ENCODE measurements at regions of chr9 and their contacts with region 1.

Region 1: GRCh38 chr9:111597817-111598729 is 1.4 kb downstream of the PTGR1 start:
- DNase-seq: peak; percentile 9 to 80 (median 62)
- ATAC-seq: peak; percentile 75
- H3K4me3 ChIP-seq: peak overlapping the region; percentile 47 to 66
- H3K4me3 Mint-ChIP-seq: peak overlapping the region; percentile 87
- H3K27ac ChIP-seq: no peak overlapping the region
- H3K27ac Mint-ChIP-seq: no peak overlapping the region
- H3K4me1 ChIP-seq: peaks cover 12% of the 10 kb centered on the region
- H3K4me1 Mint-ChIP-seq: peaks cover 19% of the 10 kb centered on the region
- H3K27me3 ChIP-seq: peaks cover 15 to 16% of the 10 kb centered on the region in 2 experiments
- H3K27me3 Mint-ChIP-seq: peaks cover 41% of the 10 kb centered on the region
- CTCF ChIP-seq: peak; percentile 72

Region 2: GRCh38 chr9:111621895-111622480 is 23.9 kb after region 1 on chr9:
- CTCF ChIA-PET with region 1: interaction called, 10 read pairs
- POLR2A ChIA-PET with region 1: no interaction called
- intact Hi-C with region 1: loop called in 1 of 2 experiments (anchors 1 kb)
- DNase-seq: peak in 5 of 9 experiments; percentile 13 to 56 (median 54)
- ATAC-seq: peak; percentile 85
- H3K4me3 ChIP-seq: no peak overlapping the region
- H3K4me3 Mint-ChIP-seq: no peak overlapping the region
- H3K27ac ChIP-seq: no peak overlapping the region
- H3K27ac Mint-ChIP-seq: no peak overlapping the region
- H3K4me1 ChIP-seq: no peaks in the 10 kb centered on the region
- H3K4me1 Mint-ChIP-seq: no peaks in the 10 kb centered on the region
- H3K27me3 ChIP-seq: no peaks in the 10 kb centered on the region
- H3K27me3 Mint-ChIP-seq: peaks cover 8% of the 10 kb centered on the region
- CTCF ChIP-seq: peak; percentile 80

Region 3: DNA sequence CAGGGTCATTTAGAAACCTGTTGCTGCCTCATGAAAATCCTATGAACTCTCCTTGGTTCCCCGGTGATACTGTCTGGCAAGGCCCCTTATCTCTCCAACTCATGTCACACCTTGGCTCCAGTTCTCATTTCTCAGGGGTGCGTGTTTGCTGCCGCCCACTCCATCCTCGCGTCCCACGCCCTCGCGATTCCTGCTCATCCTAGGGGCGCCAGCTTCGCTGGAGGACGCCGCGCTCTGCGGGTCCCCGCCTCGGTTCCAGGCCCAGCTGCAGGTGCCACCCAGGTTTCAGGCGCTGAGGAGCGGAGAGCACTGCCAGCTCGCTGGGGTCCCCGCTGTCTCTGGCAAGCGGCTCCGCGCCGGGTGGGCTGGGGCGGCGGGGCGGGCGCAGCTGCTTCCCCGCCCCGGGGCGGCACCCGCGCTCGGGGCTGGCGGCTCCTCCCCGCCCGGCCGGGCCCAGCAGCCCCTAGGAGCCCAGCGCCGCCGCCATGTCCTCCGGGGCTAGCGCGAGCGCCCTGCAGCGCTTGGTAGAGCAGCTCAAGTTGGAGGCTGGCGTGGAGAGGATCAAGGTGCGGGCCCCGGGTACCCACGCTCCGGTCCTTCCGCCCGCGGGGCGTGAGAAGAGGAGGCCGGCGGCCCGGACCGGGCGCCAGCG is 63.2 kb after region 1 on chr9 and contains the start of gene GNG10:
- CTCF ChIA-PET with region 1: no interaction called
- POLR2A ChIA-PET with region 1: no interaction called
- intact Hi-C with region 1: loop called in 1 of 2 experiments (anchors 2 kb)
- DNase-seq: peak; percentile 48 to 82 (median 66)
- ATAC-seq: peak; percentile 95
- H3K4me3 ChIP-seq: peak within 1 kb of the TSS; percentile 70 to 95
- H3K4me3 Mint-ChIP-seq: peak within 1 kb of the TSS; percentile 95
- H3K27ac ChIP-seq: peak within 1 kb of the TSS; percentile 55 to 57
- H3K27ac Mint-ChIP-seq: peak within 1 kb of the TSS; percentile 92
- H3K4me1 ChIP-seq: peaks cover 24% of the 10 kb centered on the region
- H3K4me1 Mint-ChIP-seq: peaks cover 40% of the 10 kb centered on the region
- H3K27me3 ChIP-seq: no peaks in the 10 kb centered on the region
- H3K27me3 Mint-ChIP-seq: no peaks in the 10 kb centered on the region
- CTCF ChIP-seq: no peak
- total RNA-seq, gene GNG10: 1.6 to 2.6 TPM

Region 4: DNA sequence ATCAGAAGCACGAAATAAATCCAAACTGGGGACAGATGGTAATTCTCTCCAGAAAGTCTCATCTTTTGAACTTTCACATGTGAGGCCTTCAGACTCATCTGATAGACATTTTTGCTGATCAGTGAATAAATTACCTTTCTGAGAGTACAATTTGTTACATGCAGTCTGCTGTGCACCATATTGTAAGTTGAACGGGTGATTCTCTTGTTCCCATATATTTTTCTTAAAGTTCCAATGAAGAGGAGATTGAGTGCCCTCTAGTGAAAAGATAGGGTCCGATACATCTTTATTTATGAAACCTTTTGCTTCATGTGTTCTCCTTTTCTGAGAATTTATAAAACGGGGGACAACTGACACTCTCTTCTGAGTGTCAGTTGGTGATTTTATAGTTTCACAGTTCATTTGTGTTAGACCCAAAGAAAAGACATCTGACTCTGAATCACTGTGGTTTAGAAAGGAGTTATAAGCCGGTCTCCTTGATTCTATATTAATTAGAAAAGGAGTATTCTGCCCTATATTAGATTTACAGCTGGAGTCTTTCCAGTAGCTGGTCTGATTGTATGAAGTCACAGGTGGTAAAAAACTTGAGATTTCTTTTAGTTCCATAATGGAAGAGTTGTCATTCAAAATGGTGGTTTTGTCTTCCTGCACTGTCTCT is 93.7 kb after region 1 on chr9:
- CTCF ChIA-PET with region 1: interaction called, 9 read pairs
- POLR2A ChIA-PET with region 1: interaction called, 3 read pairs
- intact Hi-C with region 1: loop called (anchors 1 kb)
- DNase-seq: peak in 2 of 9 experiments; percentile 13 to 31
- ATAC-seq: no peak
- H3K4me3 ChIP-seq: no peak overlapping the region
- H3K4me3 Mint-ChIP-seq: no peak overlapping the region
- H3K27ac ChIP-seq: no peak overlapping the region
- H3K27ac Mint-ChIP-seq: no peak overlapping the region
- H3K4me1 ChIP-seq: no peaks in the 10 kb centered on the region
- H3K4me1 Mint-ChIP-seq: peaks cover 4% of the 10 kb centered on the region
- H3K27me3 ChIP-seq: no peaks in the 10 kb centered on the region
- H3K27me3 Mint-ChIP-seq: no peaks in the 10 kb centered on the region
- CTCF ChIP-seq: no peak

Region 5: GRCh38 chr9:111720177-111720576 is 122.1 kb after region 1 on chr9:
- CTCF ChIA-PET with region 1: no interaction called
- POLR2A ChIA-PET with region 1: no interaction called
- intact Hi-C with region 1: loop called in 1 of 2 experiments (anchors 1 kb)
- DNase-seq: no peak
- ATAC-seq: no peak
- H3K4me3 ChIP-seq: no peak overlapping the region
- H3K4me3 Mint-ChIP-seq: no peak overlapping the region
- H3K27ac ChIP-seq: no peak overlapping the region
- H3K27ac Mint-ChIP-seq: no peak overlapping the region
- H3K4me1 ChIP-seq: no peaks in the 10 kb centered on the region
- H3K4me1 Mint-ChIP-seq: no peaks in the 10 kb centered on the region
- H3K27me3 ChIP-seq: no peaks in the 10 kb centered on the region
- H3K27me3 Mint-ChIP-seq: no peaks in the 10 kb centered on the region
- CTCF ChIP-seq: no peak

Region 6: DNA sequence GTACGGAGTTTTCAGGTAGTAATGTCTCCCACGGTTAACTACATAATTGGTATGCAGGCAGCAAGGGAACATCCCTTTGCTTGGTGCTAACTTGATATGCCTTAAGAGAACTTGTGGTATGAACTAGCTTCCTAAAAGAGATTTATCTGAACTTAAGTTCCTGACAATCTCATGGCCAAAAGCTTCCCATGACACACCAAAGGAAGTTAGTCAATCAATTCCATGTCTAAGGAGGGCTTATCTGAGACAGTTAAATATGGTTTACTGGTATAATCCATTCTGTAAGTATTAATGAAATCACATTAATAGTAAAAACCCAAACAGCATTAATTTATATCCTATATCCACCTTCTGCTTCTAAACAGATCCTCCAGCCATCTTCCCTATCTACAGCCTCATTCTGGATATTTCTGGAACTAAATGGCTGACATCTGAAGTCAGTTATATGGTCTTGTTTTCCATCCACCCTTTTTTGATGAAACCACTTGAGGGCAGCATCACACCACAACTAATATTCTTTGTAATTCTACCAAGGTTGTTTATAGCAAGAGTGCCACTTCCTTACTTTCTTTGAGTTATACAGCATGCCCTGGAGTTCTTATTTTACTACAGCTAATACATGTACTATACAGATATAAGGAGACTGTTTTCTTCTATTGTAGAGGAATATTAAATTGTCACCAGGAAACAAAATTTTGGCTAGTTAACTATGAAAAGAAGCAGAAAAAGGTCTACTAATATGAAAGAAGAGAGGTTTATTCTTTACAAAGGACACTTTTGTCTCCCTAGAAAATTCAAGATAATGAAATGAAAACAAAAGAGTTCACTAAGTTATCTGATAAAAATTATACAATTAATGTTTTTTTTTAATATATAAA is 161.9 kb after region 1 on chr9:
- CTCF ChIA-PET with region 1: interaction called, 5 read pairs
- POLR2A ChIA-PET with region 1: no interaction called
- intact Hi-C with region 1: loop called in 1 of 2 experiments (anchors 10 kb)
- DNase-seq: peak in 7 of 9 experiments; percentile 6 to 79 (median 41)
- ATAC-seq: peak; percentile 67
- H3K4me3 ChIP-seq: no peak overlapping the region
- H3K4me3 Mint-ChIP-seq: no peak overlapping the region
- H3K27ac ChIP-seq: no peak overlapping the region
- H3K27ac Mint-ChIP-seq: no peak overlapping the region
- H3K4me1 ChIP-seq: no peaks in the 10 kb centered on the region
- H3K4me1 Mint-ChIP-seq: peaks cover 4% of the 10 kb centered on the region
- H3K27me3 ChIP-seq: no peaks in the 10 kb centered on the region
- H3K27me3 Mint-ChIP-seq: no peaks in the 10 kb centered on the region
- CTCF ChIP-seq: peak; percentile 81